ENCODE measurements at regions of chr13 and their contacts with region 1.

Region 1: DNA sequence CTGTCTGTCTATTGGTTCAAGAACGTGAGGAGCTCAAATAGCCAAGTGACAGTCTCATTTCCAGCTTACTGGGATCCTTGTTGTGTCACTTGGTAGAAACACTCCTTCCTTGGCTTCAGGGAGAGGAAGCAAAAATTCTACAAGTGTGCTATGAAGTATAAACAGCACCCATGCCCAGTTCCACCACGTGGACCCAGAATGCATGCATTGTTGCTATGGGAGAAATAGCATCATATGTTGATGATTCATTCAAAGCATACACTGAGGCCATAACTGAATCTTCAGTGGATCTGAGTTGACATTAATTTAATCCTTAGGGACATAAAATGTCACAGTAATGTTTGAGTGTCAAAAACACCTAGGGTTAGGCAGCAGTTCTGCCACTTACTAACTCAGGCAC is 199.0 kb upstream of the RXFP2 start:
- DNase-seq: no peak
- ATAC-seq: no peak
- H3K4me3 ChIP-seq: no peak overlapping the region
- H3K4me3 Mint-ChIP-seq: no peak overlapping the region
- H3K27ac ChIP-seq: no peak overlapping the region
- H3K27ac Mint-ChIP-seq: no peak overlapping the region
- H3K4me1 ChIP-seq: no peaks in the 10 kb centered on the region
- H3K4me1 Mint-ChIP-seq: no peaks in the 10 kb centered on the region
- H3K27me3 ChIP-seq: no peaks in the 10 kb centered on the region
- H3K27me3 Mint-ChIP-seq: peaks cover 11% of the 10 kb centered on the region
- CTCF ChIP-seq: no peak

Region 2: DNA sequence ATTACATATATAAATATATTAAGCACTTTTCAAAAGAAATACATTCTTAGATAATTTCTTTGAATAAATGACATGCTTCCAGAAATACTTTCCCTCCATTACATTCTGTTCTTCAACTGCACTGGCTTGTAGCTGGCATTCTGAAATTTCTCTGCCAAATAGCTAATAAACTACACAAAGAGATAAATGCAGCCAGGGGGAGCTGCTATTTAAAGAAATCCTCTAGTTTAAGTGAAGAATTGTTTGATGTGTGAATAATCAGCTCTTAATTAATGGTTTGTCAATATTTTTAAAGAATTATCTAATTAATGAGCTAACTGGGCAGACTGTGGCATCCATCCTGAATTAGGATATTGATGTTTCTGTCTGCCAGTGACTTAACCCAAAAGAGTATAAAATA is 1975.5 kb before region 1 on chr13:
- CTCF ChIA-PET with region 1: no interaction called
- POLR2A ChIA-PET with region 1: no interaction called
- intact Hi-C with region 1: no loop called
- DNase-seq: no peak
- ATAC-seq: no peak
- H3K4me3 ChIP-seq: no peak overlapping the region
- H3K4me3 Mint-ChIP-seq: no peak overlapping the region
- H3K27ac ChIP-seq: no peak overlapping the region
- H3K27ac Mint-ChIP-seq: peak overlapping the region; percentile 7
- H3K4me1 ChIP-seq: no peaks in the 10 kb centered on the region
- H3K4me1 Mint-ChIP-seq: peaks cover 23% of the 10 kb centered on the region
- H3K27me3 ChIP-seq: no peaks in the 10 kb centered on the region
- H3K27me3 Mint-ChIP-seq: no peaks in the 10 kb centered on the region
- CTCF ChIP-seq: no peak

Region 3: DNA sequence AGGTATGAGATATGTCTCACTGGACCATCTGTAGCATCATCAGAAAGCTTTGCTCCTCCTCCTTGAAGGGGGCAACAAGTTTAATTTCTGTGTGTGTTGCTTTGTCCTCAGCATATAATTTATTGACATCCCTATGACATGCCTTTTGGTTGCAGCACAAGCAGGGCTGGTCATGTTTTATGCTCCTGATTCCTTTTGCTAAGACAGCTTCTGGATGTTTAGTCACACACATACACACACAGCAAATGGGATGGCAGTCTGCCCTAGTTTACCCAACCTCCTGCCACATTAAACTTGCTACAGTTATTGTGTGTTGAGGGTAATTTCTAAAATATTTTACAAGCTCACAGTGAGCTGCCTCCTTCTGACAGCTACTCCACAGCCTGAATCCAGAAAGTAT is 18.8 kb before region 1 on chr13:
- CTCF ChIA-PET with region 1: interaction called, 5 read pairs
- POLR2A ChIA-PET with region 1: no interaction called
- intact Hi-C with region 1: loop called in 1 of 2 experiments (anchors 1 kb)
- DNase-seq: no peak
- ATAC-seq: no peak
- H3K4me3 ChIP-seq: no peak overlapping the region
- H3K4me3 Mint-ChIP-seq: no peak overlapping the region
- H3K27ac ChIP-seq: no peak overlapping the region
- H3K27ac Mint-ChIP-seq: no peak overlapping the region
- H3K4me1 ChIP-seq: no peaks in the 10 kb centered on the region
- H3K4me1 Mint-ChIP-seq: no peaks in the 10 kb centered on the region
- H3K27me3 ChIP-seq: no peaks in the 10 kb centered on the region
- H3K27me3 Mint-ChIP-seq: no peaks in the 10 kb centered on the region
- CTCF ChIP-seq: no peak